ENCODE measurements at regions of chr10 and their contacts with region 1.

Region 1: DNA sequence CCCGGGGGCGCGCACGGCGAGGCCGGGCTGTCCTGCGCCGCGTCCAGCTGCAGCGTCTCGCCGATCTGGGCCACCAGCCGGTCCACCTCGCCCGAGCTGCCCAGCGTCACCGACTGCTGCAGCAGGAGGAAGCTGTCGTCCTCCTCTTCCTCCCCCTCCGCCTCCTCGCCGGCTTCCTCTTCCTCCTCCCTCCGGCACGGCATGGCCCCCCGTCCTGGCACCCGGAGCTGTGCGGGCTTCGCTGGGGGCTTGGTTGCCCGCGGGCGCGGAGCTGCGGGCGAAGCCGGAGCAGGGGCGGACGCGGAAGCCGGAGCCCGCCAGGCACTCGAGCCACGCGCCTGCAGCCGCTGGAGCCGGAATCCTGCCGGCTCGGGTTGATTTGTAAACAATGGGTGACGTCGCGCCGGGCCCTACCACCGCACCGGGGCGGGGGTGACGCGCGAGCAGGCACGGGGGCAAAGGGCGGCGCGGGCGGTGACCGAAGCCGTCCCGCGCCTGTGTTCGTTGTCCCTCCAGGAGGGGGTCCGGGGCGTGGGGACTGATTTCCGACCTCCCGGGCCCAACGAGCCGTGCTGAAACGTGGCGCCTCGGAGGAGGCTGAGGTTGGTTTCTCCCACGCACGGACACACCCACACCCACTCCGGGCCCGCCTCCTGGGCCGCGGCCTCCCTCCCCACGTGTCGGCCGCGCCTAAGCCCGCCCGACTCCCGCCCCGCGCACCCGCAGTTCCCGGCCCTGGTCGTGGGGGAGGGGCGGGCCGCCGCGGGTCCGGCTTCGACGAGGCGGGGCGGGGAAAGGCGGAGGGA is at the start of gene FRAT2:
- DNase-seq: peak; percentile 96
- H3K4me3 ChIP-seq: peak within 1 kb of the TSS; percentile 79 to 92 (median 81)
- H3K27ac ChIP-seq: peak within 1 kb of the TSS; percentile 93 to 95 (median 94)
- H3K4me1 ChIP-seq: peaks cover 0 to 58% (median 47%) of the 10 kb centered on the region in 4 donors
- H3K27me3 ChIP-seq: no peaks in the 10 kb centered on the region
- CTCF ChIP-seq: no peak
- EP300 ChIP-seq: peak in 1 of 4 donors; percentile 15
- POLR2A ChIP-seq: peak; percentile 72 to 77
- total RNA-seq, gene FRAT2: 11.9 to 18.9 (median 15.7) TPM

Region 2: GRCh38 chr10:96978621-96979154 is 355.9 kb before region 1 on chr10:
- intact Hi-C with region 1: no loop called
- DNase-seq: no peak
- H3K4me3 ChIP-seq: no peak overlapping the region
- H3K27ac ChIP-seq: no peak overlapping the region
- H3K4me1 ChIP-seq: no peaks in the 10 kb centered on the region
- H3K27me3 ChIP-seq: no peaks in the 10 kb centered on the region
- CTCF ChIP-seq: no peak
- EP300 ChIP-seq: no peak
- POLR2A ChIP-seq: no peak

Region 3: GRCh38 chr10:97278491-97278989 is 56.0 kb before region 1 on chr10:
- intact Hi-C with region 1: loop called (anchors 2 kb)
- DNase-seq: no peak
- H3K4me3 ChIP-seq: no peak overlapping the region
- H3K27ac ChIP-seq: peak overlapping the region; percentile 16 to 47 (median 40)
- H3K4me1 ChIP-seq: peaks cover 0 to 15% (median 5%) of the 10 kb centered on the region in 4 donors
- H3K27me3 ChIP-seq: no peaks in the 10 kb centered on the region
- CTCF ChIP-seq: peak in 3 of 4 experiments; percentile 51 to 67 (median 64)
- EP300 ChIP-seq: no peak
- POLR2A ChIP-seq: no peak

Region 4: GRCh38 chr10:97292097-97292862 is 42.3 kb before region 1 on chr10 and contains the start of gene ARHGAP19:
- intact Hi-C with region 1: loop called (anchors 1 kb)
- DNase-seq: peak; percentile 99
- H3K4me3 ChIP-seq: peak within 1 kb of the TSS; percentile 61 to 89 (median 80)
- H3K27ac ChIP-seq: peak within 1 kb of the TSS; percentile 88 to 97 (median 94)
- H3K4me1 ChIP-seq: peaks cover 0 to 14% (median 5%) of the 10 kb centered on the region in 4 donors
- H3K27me3 ChIP-seq: no peaks in the 10 kb centered on the region
- CTCF ChIP-seq: no peak
- EP300 ChIP-seq: no peak
- POLR2A ChIP-seq: peak; percentile 18 to 71
- total RNA-seq, gene ARHGAP19: 4.2 to 9.1 (median 7.3) TPM

Region 5: DNA sequence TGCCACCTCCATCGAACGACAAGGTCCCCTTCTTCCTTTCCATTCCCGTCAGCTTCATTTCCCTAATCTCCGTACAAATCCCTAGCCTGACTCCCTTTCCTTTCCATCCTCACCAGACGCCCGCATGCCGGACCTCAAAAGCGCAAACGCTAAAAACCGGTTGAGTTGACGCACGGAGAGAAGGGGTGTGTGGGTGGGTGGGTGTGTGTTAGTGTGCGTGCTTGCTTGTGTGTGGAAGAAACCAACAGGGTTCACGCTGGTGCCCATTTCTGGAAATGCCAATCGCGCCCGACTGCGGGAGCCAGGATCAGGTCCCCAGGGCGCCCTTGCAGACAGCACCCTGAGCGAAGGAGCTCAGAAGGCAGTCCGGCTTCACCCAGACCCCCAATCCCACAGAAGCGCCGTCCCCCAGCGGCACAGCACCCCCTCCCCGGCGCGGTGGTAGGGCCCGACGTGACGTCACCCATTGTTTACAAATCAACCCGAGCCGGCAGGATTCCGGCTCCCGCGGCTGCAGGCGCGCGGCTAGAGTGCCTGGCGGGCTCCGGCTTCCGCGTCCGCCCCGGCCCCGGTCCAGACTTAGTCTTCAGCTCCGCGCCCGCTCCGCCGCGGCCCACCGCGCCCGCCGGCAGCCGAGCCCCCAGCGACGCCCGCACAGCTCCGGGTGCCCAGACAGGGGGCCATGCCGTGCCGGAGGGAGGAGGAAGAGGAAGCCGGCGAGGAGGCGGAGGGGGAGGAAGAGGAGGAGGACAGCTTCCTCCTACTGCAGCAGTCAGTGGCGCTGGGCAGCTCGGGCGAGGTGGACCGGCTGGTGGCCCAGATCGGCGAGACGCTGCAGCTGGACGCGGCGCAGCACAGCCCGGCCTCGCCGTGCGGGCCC is 15.6 kb before region 1 on chr10 and contains the start of gene FRAT1:
- intact Hi-C with region 1: loop called (anchors 1 kb)
- DNase-seq: peak; percentile 94
- H3K4me3 ChIP-seq: peak within 1 kb of the TSS; percentile 55 to 97 (median 82)
- H3K27ac ChIP-seq: peak within 1 kb of the TSS; percentile 90 to 97 (median 92)
- H3K4me1 ChIP-seq: peaks cover 0 to 33% (median 20%) of the 10 kb centered on the region in 4 donors
- H3K27me3 ChIP-seq: no peaks in the 10 kb centered on the region
- CTCF ChIP-seq: no peak
- EP300 ChIP-seq: no peak
- POLR2A ChIP-seq: peak; percentile 33 to 41
- total RNA-seq, gene FRAT1: 4.1 to 7.1 (median 5.1) TPM

Region 6: GRCh38 chr10:97400665-97401454 is 66.3 kb after region 1 on chr10 and contains the start of gene RRP12:
- intact Hi-C with region 1: loop called (anchors 5 kb)
- DNase-seq: peak; percentile 95
- H3K4me3 ChIP-seq: peak within 1 kb of the TSS; percentile 37 to 86 (median 74)
- H3K27ac ChIP-seq: peak within 1 kb of the TSS; percentile 65 to 82 (median 72)
- H3K4me1 ChIP-seq: peaks cover 0 to 19% (median 17%) of the 10 kb centered on the region in 4 donors
- H3K27me3 ChIP-seq: no peaks in the 10 kb centered on the region
- CTCF ChIP-seq: no peak
- EP300 ChIP-seq: peak in 1 of 4 donors; percentile 6
- POLR2A ChIP-seq: no peak
- total RNA-seq, gene RRP12: 5.9 to 17.4 (median 9.8) TPM

Region 7: GRCh38 chr10:97427525-97428179 is 93.1 kb after region 1 on chr10:
- intact Hi-C with region 1: no loop called
- DNase-seq: no peak
- H3K4me3 ChIP-seq: peak overlapping the region; percentile 84 to 96 (median 90)
- H3K27ac ChIP-seq: peak overlapping the region; percentile 91 to 93 (median 92)
- H3K4me1 ChIP-seq: peaks cover 0 to 30% (median 29%) of the 10 kb centered on the region in 4 donors
- H3K27me3 ChIP-seq: no peaks in the 10 kb centered on the region
- CTCF ChIP-seq: no peak
- EP300 ChIP-seq: no peak
- POLR2A ChIP-seq: no peak

Region 8: GRCh38 chr10:97788552-97789442 is 454.2 kb after region 1 on chr10:
- intact Hi-C with region 1: no loop called
- DNase-seq: no peak
- H3K4me3 ChIP-seq: no peak overlapping the region
- H3K27ac ChIP-seq: no peak overlapping the region
- H3K4me1 ChIP-seq: peaks cover 0 to 8% (median 0%) of the 10 kb centered on the region in 4 donors
- H3K27me3 ChIP-seq: peaks cover 0 to 53% (median 18%) of the 10 kb centered on the region in 3 donors
- CTCF ChIP-seq: no peak
- EP300 ChIP-seq: no peak
- POLR2A ChIP-seq: no peak

Measured in sigmoid colon (tissue), 7 donors.